ENCODE measurements at regions of chr22 and their contacts with region 1.

Region 1: DNA sequence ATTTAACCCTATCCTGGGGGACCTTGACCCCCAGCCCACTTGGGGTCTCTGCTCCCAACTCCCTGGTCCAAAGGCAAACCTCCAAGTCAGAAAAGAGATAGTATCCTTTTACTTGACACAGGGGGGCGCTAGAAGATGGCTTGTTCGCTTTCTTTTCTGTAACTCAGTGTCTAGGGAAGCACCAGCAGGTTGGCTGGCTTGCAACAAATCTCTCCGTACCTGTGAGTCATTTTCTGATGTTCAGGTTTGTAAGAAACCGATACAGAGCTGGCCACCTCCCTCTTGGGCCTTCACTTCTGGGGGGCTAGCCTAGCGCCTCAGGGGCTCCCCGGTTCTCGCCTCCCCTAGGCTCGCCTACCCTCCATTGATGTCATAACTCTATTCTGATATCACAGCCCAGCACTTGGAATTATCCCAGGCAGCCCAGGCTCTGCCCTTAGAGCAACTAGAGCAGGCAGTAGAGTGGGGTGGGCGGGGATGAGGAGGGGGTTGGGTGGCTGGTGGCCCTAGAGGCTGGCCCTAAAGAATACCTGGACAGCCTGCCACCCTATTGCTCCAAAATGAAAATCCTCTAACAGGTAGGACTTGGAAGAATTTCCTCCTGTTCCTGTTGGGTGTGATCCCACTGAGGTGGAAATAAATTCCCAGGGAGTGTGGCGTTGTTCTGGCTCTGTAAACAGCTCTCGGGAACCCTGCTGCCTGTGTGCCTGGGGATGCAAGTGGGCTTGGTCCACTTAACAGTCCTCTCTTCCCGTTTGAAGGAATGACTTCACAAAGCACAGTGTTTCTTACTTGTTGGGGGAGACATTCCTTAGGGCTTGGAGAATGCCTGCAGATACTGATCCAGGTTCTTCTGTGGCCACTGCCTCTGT is 69.4 kb downstream of the OSBP2 start:
- DNase-seq: peak; percentile 27 to 39
- ATAC-seq: peak; percentile 78

Region 2: GRCh38 chr22:30890686-30891442 is 126.8 kb after region 1 on chr22:
- intact Hi-C with region 1: loop called in 1 of 2 experiments (anchors 10 kb)
- DNase-seq: peak in 1 of 2 donors; percentile 51
- ATAC-seq: peak; percentile 73

Region 3: GRCh38 chr22:30910358-30910757 is 146.3 kb after region 1 on chr22:
- intact Hi-C with region 1: loop called in 1 of 2 experiments (anchors 10 kb)
- DNase-seq: no peak
- ATAC-seq: no peak

Measured in left colon (tissue), 2 donors.